IMR-90 (cell line): ENCODE measurements at regions of chr6 and their contacts with region 1.

Region 1: DNA sequence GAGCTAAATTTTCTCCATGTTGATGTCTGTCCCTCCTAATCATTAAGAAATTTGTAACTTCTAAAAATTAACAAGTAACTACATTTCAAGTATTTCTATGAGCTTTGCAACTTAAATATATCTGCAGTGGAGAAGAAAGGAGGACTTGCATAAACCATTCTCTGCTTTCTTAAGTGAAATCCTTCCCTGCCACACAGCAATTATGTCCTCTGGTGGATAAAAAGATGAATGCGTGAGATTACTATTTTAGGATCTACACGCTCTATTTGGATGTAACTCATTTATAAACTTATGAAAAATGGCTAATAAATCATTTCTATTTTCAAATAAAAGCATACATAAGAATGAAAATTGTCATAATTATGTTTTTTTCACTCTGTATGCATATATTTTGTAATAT is 338.0 kb upstream of the PTCHD4 start:
- DNase-seq: peak; percentile 19
- ATAC-seq: no peak
- H3K4me3 ChIP-seq: no peak overlapping the region
- H3K27ac ChIP-seq: no peak overlapping the region
- H3K4me1 ChIP-seq: no peaks in the 10 kb centered on the region
- H3K27me3 ChIP-seq: no peaks in the 10 kb centered on the region
- CTCF ChIP-seq: peak; percentile 28
- POLR2A ChIP-seq: no peak
- RAD21 ChIP-seq: peak; percentile 33; the same call in 1 of the 2 replicates

Region 2: GRCh38 chr6:48389146-48390043 is 59.6 kb before region 1 on chr6:
- CTCF ChIA-PET with region 1: no interaction called
- POLR2A ChIA-PET with region 1: no interaction called
- dilution Hi-C with region 1: no loop called
- in situ Hi-C with region 1: no loop called
- intact Hi-C with region 1: loop called (anchors 5 kb)
- DNase-seq: no peak
- ATAC-seq: no peak
- H3K4me3 ChIP-seq: no peak overlapping the region
- H3K27ac ChIP-seq: no peak overlapping the region
- H3K4me1 ChIP-seq: no peaks in the 10 kb centered on the region
- H3K27me3 ChIP-seq: no peaks in the 10 kb centered on the region
- CTCF ChIP-seq: no peak
- POLR2A ChIP-seq: no peak
- RAD21 ChIP-seq: no peak